Lower lobe of right lung (tissue), 2 donors: ENCODE measurements at regions of chr18 and their contacts with region 1.

Region 1: GRCh38 chr18:23515911-23516546 is 12.7 kb downstream of the RMC1 start:
- DNase-seq: peak; percentile 74
- ATAC-seq: peak; percentile 94 to 95
- H3K4me3 ChIP-seq: no peak overlapping the region
- H3K27ac ChIP-seq: no peak overlapping the region
- H3K4me1 ChIP-seq: peaks cover 10% of the 10 kb centered on the region
- H3K27me3 ChIP-seq: no peaks in the 10 kb centered on the region
- CTCF ChIP-seq: peak; percentile 88

Region 2: GRCh38 chr18:23317975-23318675 is 197.9 kb before region 1 on chr18:
- intact Hi-C with region 1: no loop called
- DNase-seq: no peak
- ATAC-seq: no peak
- H3K4me3 ChIP-seq: no peak overlapping the region
- H3K27ac ChIP-seq: no peak overlapping the region
- H3K4me1 ChIP-seq: no peaks in the 10 kb centered on the region
- H3K27me3 ChIP-seq: no peaks in the 10 kb centered on the region
- CTCF ChIP-seq: no peak

Region 3: GRCh38 chr18:23416298-23416697 is 99.7 kb before region 1 on chr18:
- intact Hi-C with region 1: no loop called
- DNase-seq: no peak
- ATAC-seq: peak; percentile 41 to 56
- H3K4me3 ChIP-seq: no peak overlapping the region
- H3K27ac ChIP-seq: no peak overlapping the region
- H3K4me1 ChIP-seq: no peaks in the 10 kb centered on the region
- H3K27me3 ChIP-seq: no peaks in the 10 kb centered on the region
- CTCF ChIP-seq: no peak

Region 4: DNA sequence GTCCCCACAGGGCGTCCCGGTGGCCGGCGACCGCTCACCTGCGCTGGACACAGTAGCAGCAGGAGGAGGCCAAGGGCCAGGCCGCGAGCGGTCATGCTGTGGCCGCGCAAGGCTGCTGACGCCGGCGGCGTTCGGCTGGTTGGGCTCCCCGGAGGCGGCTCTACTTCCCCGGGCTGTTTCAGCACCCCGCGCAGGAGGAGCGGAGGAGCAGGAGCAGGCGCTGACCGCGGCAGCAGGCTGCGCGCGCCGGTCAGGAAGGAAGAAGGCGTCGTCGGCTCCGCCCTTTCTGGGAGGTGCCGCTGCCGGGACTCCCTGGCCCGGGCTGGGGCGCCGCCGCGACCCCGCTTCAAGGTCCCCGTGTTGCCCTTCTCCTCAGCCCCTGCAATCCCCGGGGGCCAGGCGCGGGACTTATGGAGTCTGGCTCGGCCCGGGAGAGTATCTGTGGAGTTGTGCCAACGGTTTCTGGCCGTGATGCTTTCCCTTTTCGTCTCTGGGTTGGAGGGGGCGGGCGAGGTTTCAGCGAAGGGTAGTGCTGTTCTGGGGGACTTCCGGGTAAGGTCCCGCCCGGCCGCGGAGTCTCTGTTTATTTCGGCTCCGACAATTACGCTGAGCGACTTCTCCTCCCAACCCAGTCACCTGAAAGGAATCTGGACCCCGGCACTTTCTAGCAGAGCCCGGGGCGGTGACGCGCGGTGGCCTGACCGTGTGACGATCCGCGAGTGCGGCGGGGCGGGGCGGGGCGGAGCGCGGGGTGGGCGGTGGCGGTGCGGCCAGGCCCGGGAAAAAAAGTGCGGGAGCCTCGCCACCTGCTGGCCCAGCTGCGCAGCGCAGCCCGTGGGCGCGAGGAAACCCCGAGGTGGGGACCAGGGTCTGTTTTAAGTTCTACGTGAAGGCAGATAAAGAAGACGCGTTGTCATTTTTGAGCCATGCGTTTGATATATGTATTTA is 70.5 kb after region 1 on chr18 and contains the start of gene NPC1:
- intact Hi-C with region 1: loop called (anchors 10 kb)
- DNase-seq: peak; percentile 97
- ATAC-seq: peak; percentile 97
- H3K4me3 ChIP-seq: peak within 1 kb of the TSS; percentile 89
- H3K27ac ChIP-seq: peak within 1 kb of the TSS; percentile 98
- H3K4me1 ChIP-seq: peaks cover 45% of the 10 kb centered on the region
- H3K27me3 ChIP-seq: no peaks in the 10 kb centered on the region
- CTCF ChIP-seq: peak; percentile 98
- total RNA-seq, gene NPC1: 114 TPM